ENCODE measurements at regions of chr20 and their contacts with region 1.

Region 1: GRCh38 chr20:53594068-53595017 is 704 bp upstream of the ZNF217 start:
- DNase-seq: peak; percentile 96
- H3K4me3 Mint-ChIP-seq: peak overlapping the region; percentile 94
- H3K27ac Mint-ChIP-seq: peak overlapping the region; percentile 99
- H3K4me1 Mint-ChIP-seq: peaks cover 51% of the 10 kb centered on the region
- H3K27me3 Mint-ChIP-seq: no peaks in the 10 kb centered on the region

Region 2: GRCh38 chr20:53609491-53610445 is 15.4 kb after region 1 on chr20:
- CTCF ChIA-PET with region 1: interaction called, 4 read pairs
- intact Hi-C with region 1: loop called (anchors 1 kb)
- DNase-seq: peak; percentile 91
- H3K4me3 Mint-ChIP-seq: peak overlapping the region; percentile 79
- H3K27ac Mint-ChIP-seq: peak overlapping the region; percentile 98
- H3K4me1 Mint-ChIP-seq: peaks cover 33% of the 10 kb centered on the region
- H3K27me3 Mint-ChIP-seq: no peaks in the 10 kb centered on the region

Region 3: DNA sequence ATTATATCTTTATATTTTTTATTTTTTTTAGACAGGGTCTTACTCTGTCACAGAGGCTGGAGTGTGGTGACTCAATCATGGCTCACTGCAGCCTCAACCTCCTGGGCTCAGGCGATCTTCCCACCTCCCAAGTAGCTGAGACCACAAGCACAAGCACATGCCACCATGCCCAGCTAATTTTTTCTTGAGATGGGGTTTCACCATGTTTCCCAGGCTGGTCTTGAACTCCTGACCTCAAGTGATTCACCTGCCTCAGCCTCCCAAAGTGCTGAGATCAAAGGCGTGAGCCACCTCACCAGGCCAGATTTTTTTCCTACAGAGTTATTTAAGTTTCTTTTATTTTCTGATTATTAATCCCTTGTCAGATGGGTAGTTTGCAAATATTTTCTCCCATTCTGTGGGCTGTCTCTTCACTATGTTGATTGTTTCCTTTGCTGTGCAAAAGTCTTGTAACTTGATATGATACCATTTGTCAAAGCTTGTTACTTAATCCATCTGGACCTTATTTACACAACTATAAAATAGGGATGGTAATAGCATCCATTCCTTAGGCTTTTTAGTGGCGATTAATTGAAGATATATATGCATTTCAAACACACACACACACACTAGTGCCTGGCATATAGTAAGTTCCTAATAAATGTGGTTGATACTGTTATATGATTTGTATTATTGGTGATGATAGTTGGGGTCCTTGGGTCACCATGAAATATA is 288.9 kb after region 1 on chr20:
- CTCF ChIA-PET with region 1: no interaction called
- intact Hi-C with region 1: no loop called
- DNase-seq: peak; percentile 25
- H3K4me3 Mint-ChIP-seq: no peak overlapping the region
- H3K27ac Mint-ChIP-seq: no peak overlapping the region
- H3K4me1 Mint-ChIP-seq: peaks cover 50% of the 10 kb centered on the region
- H3K27me3 Mint-ChIP-seq: no peaks in the 10 kb centered on the region

Region 4: DNA sequence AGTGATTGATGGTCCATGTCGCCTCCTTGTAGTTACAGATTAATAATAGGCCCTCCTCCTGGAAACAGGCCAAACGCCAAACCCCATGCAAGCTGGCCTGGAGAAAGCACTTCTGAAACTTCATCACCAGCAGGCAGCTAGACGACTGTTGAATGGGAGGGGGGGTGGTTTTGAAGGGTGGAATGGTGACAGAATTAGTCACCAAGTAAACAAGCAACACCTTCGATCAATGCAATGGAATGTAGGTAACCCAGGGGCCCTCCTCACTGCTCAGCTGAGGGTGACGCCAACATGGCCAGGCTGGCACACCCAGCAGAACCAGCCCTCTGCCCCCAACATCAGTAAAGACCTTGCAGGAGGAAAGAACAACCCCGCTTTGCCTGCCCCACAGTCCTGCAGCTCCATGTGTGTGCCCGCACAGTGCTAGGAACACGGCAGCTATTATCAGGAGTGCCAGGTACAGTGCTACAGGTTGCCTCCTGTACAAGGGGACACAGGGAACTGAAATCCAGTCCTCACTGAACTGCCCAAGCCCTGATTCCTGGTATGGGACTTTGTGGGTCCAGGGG is 473.3 kb after region 1 on chr20:
- CTCF ChIA-PET with region 1: no interaction called
- intact Hi-C with region 1: no loop called
- DNase-seq: no peak
- H3K4me3 Mint-ChIP-seq: no peak overlapping the region
- H3K27ac Mint-ChIP-seq: no peak overlapping the region
- H3K4me1 Mint-ChIP-seq: peaks cover 8% of the 10 kb centered on the region
- H3K27me3 Mint-ChIP-seq: no peaks in the 10 kb centered on the region